ENCODE measurements at regions of chr1 and their contacts with region 1.

Region 1: DNA sequence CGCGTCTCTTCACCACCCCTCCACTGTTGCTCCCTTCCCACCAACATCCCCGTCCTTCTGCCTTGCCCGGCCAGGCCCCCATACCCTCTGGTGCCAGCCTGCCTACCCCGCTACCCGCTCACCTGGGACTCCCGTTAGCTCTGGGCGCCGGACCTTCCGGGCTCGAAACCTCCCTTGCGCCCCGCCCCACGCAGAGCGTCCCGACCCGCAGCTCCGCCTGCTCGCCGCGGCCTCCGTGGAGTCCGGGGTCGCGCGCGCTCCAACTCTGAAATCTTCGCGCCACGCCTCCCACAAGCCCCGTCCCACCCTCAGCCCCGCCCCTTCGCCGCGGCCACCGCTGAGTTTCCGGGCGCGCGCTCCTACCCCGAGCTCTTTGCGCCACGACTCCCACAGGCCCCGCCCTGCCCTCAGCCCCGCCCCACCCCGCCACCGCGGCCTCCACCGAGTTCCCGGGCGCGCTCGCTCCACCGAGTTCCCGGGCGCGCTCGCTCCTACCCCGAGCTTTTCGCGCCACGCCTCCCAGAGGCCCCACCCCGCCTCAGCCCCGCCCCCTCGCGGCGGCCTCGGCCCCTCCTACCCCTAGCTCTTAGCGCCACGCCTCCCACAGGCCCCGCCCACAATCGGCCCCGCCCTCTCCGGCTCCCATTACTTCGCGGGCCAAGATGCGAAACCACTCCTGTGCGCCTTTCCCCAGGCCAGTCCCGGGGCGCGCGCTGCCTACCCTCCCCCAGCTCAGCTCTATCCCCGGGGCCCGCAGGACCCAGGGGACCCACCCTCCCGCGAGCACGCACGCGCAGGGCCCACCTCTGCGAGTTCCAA is at the start of gene IFT25:
- DNase-seq: peak; percentile 95
- H3K4me3 ChIP-seq: peak within 1 kb of the TSS; percentile 90 to 99 (median 96)
- H3K27ac ChIP-seq: peak within 1 kb of the TSS; percentile 84
- H3K4me1 ChIP-seq: peaks cover 24% of the 10 kb centered on the region
- H3K27me3 ChIP-seq: no peaks in the 10 kb centered on the region
- CTCF ChIP-seq: no peak
- total RNA-seq, gene IFT25: 14.3 to 33.7 TPM

Region 2: DNA sequence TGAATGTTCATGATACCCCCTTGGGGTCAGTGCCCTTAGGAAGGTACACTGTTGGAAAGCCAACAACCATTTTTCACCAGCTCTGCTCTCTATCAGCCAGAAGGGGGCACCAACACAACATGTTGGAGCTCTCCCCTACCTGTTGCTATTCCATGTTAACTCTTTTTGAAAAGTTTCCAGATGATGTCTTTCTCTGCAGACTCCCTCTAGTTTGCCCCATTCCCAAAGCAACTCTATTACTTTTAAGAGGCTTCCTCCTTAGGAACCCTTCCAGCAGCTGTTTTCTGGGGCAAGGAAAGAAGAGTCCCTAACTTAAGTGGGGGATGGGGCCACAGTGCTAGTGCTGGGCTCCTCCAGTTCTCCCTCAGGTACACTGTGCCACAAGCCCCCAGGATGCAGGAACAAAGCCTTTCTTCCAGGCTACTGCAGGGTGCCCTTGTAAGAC is 84.7 kb before region 1 on chr1:
- CTCF ChIA-PET with region 1: interaction called, 3 read pairs
- dilution Hi-C with region 1: no loop called
- in situ Hi-C with region 1: no loop called
- intact Hi-C with region 1: loop called (anchors 1 kb)
- DNase-seq: peak; percentile 30
- H3K4me3 ChIP-seq: no peak overlapping the region
- H3K27ac ChIP-seq: no peak overlapping the region
- H3K4me1 ChIP-seq: no peaks in the 10 kb centered on the region
- H3K27me3 ChIP-seq: no peaks in the 10 kb centered on the region
- CTCF ChIP-seq: peak; percentile 72 to 85

Region 3: GRCh38 chr1:53878492-53879105 is 67.0 kb before region 1 on chr1:
- CTCF ChIA-PET with region 1: no interaction called
- dilution Hi-C with region 1: no loop called
- in situ Hi-C with region 1: loop called in 1 of 2 experiments (anchors 10 kb)
- intact Hi-C with region 1: loop called (anchors 1 kb)
- DNase-seq: peak; percentile 44
- H3K4me3 ChIP-seq: no peak overlapping the region
- H3K27ac ChIP-seq: no peak overlapping the region
- H3K4me1 ChIP-seq: no peaks in the 10 kb centered on the region
- H3K27me3 ChIP-seq: no peaks in the 10 kb centered on the region
- CTCF ChIP-seq: peak; percentile 47 to 62

Region 4: DNA sequence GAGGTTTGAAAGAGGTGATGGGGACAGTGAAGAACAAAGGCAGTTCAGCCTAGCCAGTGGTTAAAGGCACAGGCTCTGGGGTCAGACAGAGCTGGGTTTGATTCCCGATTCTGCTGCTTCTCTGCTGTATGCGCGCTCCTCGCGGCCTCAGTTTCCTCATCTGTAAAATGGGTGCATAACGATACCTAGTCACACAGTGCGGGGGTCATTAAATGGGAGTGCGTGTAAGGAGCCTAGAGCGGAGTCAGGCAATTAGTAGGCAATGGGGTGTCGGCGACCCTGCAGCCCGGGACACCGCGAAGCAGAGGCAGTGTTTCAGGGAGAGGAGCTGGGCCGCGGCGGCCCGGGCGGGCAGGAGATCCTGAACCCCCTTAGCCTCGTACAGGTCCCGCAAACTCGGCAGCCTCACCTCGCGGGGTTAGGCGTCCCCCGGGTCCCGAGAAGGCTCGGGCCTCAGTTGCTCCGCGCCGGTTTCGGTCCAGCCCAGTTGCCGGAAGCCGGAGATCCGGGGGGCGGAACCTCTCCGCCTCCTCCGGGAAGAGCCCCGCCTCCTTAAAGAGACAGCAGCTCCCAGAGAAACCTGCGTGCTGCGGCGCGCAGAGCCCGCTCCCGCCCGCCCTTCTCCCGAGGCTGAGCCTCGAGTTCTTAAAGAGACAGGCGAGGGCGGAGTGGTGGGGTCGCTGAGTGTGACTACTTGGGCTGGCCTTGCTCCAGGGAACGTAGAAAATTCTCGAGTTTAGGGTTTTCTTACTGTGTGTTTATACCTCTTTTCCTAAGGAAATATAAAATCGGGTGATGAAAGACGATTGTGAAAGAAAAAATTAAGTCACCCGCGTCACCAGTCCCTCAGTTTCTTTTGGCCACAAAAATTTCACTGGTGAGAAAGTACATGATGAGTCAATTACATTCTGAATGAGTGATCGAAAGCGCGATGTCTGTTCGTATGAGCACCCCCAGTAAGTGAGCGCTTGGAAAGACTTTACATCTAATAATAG is 56.0 kb before region 1 on chr1 and contains the start of gene YIPF1:
- CTCF ChIA-PET with region 1: no interaction called
- dilution Hi-C with region 1: no loop called
- in situ Hi-C with region 1: loop called in 1 of 2 experiments (anchors 10 kb)
- intact Hi-C with region 1: loop called (anchors 1 kb)
- DNase-seq: peak; percentile 91
- H3K4me3 ChIP-seq: peak within 1 kb of the TSS; percentile 78 to 90 (median 79)
- H3K27ac ChIP-seq: peak within 1 kb of the TSS; percentile 90
- H3K4me1 ChIP-seq: peaks cover 15% of the 10 kb centered on the region
- H3K27me3 ChIP-seq: no peaks in the 10 kb centered on the region
- CTCF ChIP-seq: no peak
- total RNA-seq, gene YIPF1: 21.6 to 24.8 TPM

Region 5: DNA sequence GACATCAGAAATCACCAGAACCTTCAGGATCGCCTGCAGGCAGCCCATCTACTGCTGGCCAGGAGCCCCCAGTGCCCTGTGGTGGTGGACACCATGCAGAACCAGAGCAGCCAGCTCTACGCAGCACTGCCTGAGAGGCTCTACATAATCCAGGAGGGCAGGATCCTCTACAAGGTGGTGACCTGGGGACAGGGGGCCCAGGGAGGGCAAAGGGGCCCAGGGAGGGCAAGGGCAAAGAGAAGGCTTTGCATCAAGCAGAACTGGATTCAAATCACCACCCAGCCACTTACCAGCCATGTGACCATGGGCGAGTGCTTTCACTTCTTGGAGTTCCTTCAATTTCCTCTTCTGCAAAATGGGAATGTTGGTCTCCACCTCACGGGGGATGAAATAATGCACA is 39.5 kb before region 1 on chr1:
- CTCF ChIA-PET with region 1: no interaction called
- dilution Hi-C with region 1: no loop called
- in situ Hi-C with region 1: no loop called
- intact Hi-C with region 1: loop called (anchors 2 kb)
- DNase-seq: no peak
- H3K4me3 ChIP-seq: no peak overlapping the region
- H3K27ac ChIP-seq: no peak overlapping the region
- H3K4me1 ChIP-seq: peaks cover 12% of the 10 kb centered on the region
- H3K27me3 ChIP-seq: no peaks in the 10 kb centered on the region
- CTCF ChIP-seq: no peak

Region 6: GRCh38 chr1:54070171-54070837 is 124.7 kb after region 1 on chr1:
- CTCF ChIA-PET with region 1: no interaction called
- dilution Hi-C with region 1: no loop called
- in situ Hi-C with region 1: no loop called
- intact Hi-C with region 1: no loop called
- DNase-seq: peak; percentile 28
- H3K4me3 ChIP-seq: no peak overlapping the region
- H3K27ac ChIP-seq: no peak overlapping the region
- H3K4me1 ChIP-seq: no peaks in the 10 kb centered on the region
- H3K27me3 ChIP-seq: no peaks in the 10 kb centered on the region
- CTCF ChIP-seq: peak; percentile 76 to 79

Measured in mammary epithelial cell (primary cell).